CD4-positive, alpha-beta T cell (primary cell): ENCODE measurements at regions of chr14 and their contacts with region 1.

Region 1: DNA sequence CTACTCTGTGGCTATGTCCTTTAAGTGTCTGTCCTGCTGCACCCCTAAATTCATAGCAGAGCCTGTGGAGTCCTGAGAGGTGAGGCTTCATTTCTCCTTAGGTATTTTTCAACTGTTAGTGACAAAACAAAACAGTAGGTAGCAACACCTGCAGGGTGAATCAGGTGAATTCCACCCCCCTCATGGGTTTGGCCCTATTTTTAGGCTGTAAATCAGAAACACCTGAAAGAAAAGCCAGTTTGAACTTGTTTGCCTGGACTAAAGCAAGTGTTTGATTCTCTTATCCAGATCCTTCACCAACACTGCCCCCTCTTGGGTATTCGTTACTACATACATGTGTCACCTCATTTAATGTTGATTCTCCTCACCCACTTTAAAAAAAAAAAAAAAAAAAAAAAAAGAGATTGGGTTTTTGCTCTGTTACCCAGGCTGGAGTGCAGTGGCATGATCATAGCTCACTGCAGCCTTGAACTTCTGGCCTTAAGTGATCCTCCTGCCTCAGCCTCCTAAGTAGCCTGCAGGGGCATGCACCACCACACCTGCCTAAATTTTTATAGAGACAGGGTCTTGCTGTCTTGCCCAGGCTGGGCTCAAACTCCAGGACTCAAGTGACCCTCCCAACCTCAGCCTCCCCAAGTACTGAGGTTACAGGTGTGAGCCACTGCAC is 10.3 kb downstream of the TBPL2 start:
- DNase-seq: peak in 11 of 14 experiments; percentile 4 to 85 (median 48)
- ATAC-seq: peak; percentile 97
- H3K4me3 ChIP-seq: no peak overlapping the region
- H3K4me3 Mint-ChIP-seq: no peak overlapping the region
- H3K27ac ChIP-seq: peak overlapping the region in 1 of 2 donors; percentile 13
- H3K27ac Mint-ChIP-seq: peak overlapping the region; percentile 59
- H3K4me1 ChIP-seq: peaks cover 26% of the 10 kb centered on the region
- H3K4me1 Mint-ChIP-seq: peaks cover 42% of the 10 kb centered on the region
- H3K27me3 ChIP-seq: no peaks in the 10 kb centered on the region
- H3K27me3 Mint-ChIP-seq: no peaks in the 10 kb centered on the region
- CTCF ChIP-seq: peak; percentile 58

Region 2: DNA sequence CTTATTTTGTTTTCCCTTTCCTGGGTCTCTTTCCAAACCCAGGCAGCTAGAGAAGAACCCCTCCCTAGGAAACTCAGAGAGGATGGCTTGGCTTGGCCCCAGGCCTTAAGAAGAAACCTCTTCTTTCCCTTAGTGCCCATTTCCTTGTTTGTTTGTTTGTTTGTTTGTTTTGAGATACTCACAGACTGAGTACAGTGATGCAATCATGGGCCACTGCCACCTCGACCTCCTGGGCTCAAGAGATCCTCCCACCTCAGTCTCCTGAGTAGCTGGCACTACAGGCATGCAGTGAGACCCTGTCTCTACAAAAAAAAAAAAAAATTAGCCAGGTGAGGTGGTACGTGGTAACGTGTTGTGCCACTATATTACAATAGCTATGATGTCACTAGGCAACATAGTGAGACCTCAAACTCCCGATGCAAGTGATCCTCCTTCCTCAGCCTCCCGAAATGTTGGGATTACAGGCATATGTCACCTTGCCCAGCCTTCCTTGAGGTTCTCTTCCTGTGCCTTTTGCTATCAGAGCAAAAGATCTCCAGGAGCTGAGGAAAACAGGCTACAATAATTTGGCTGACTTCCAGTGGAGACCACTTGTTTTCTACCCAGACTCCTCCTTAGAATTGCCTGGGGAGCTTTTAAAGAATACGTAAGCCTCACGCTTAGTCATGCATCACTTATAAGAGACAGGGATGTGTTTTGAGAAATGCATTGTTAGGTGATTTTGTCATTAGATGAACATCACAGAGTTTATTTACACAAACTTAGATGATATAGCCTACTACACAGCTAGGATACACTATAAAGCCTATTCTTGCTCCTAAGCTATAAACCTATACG is 335.6 kb before region 1 on chr14:
- CTCF ChIA-PET with region 1: no interaction called
- POLR2A ChIA-PET with region 1: no interaction called
- intact Hi-C with region 1: loop called in 1 of 2 experiments (anchors 5 kb)
- DNase-seq: no peak
- ATAC-seq: no peak
- H3K4me3 ChIP-seq: no peak overlapping the region
- H3K4me3 Mint-ChIP-seq: no peak overlapping the region
- H3K27ac ChIP-seq: no peak overlapping the region
- H3K27ac Mint-ChIP-seq: no peak overlapping the region
- H3K4me1 ChIP-seq: peaks cover 29% of the 10 kb centered on the region
- H3K4me1 Mint-ChIP-seq: peaks cover 19% of the 10 kb centered on the region
- H3K27me3 ChIP-seq: no peaks in the 10 kb centered on the region
- H3K27me3 Mint-ChIP-seq: no peaks in the 10 kb centered on the region
- CTCF ChIP-seq: no peak

Region 3: GRCh38 chr14:55245657-55246268 is 184.4 kb before region 1 on chr14:
- CTCF ChIA-PET with region 1: interaction called, 3 read pairs
- POLR2A ChIA-PET with region 1: no interaction called
- intact Hi-C with region 1: loop called (anchors 1 to 2 kb)
- DNase-seq: peak in 8 of 14 experiments; percentile 8 to 70 (median 32)
- ATAC-seq: peak; percentile 76
- H3K4me3 ChIP-seq: no peak overlapping the region
- H3K4me3 Mint-ChIP-seq: no peak overlapping the region
- H3K27ac ChIP-seq: no peak overlapping the region
- H3K27ac Mint-ChIP-seq: no peak overlapping the region
- H3K4me1 ChIP-seq: no peaks in the 10 kb centered on the region
- H3K4me1 Mint-ChIP-seq: no peaks in the 10 kb centered on the region
- H3K27me3 ChIP-seq: peaks cover 0 to 5% of the 10 kb centered on the region in 2 experiments
- H3K27me3 Mint-ChIP-seq: peaks cover 38% of the 10 kb centered on the region
- CTCF ChIP-seq: peak; percentile 68

Region 4: DNA sequence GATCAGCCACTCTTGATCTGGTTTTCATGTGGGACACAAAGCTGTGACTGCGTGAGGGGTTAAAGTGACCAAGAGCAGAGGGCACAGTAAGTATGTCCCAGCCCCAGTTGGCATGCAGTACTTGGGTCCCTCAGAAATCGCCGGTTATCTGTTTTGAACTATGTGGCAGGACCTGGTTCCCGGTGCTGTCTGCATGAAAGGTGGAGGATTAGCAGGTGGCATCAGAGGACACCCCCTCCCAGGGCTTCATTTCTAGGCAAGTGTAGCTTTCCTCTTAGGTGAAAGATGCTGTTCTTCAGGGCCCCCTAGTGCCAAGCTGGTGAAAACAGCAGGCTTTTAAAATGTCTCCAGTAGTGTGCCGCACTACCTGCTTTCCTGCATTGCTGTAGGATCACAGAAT is 75.7 kb before region 1 on chr14:
- CTCF ChIA-PET with region 1: no interaction called
- POLR2A ChIA-PET with region 1: no interaction called
- intact Hi-C with region 1: loop called in 1 of 2 experiments (anchors 5 kb)
- DNase-seq: peak; percentile 48 to 89 (median 58)
- ATAC-seq: peak; percentile 90
- H3K4me3 ChIP-seq: peak overlapping the region; percentile 32
- H3K4me3 Mint-ChIP-seq: peak overlapping the region; percentile 57
- H3K27ac ChIP-seq: peak overlapping the region; percentile 43 to 67
- H3K27ac Mint-ChIP-seq: peak overlapping the region; percentile 91
- H3K4me1 ChIP-seq: peaks cover 17% of the 10 kb centered on the region
- H3K4me1 Mint-ChIP-seq: peaks cover 17% of the 10 kb centered on the region
- H3K27me3 ChIP-seq: no peaks in the 10 kb centered on the region
- H3K27me3 Mint-ChIP-seq: no peaks in the 10 kb centered on the region
- CTCF ChIP-seq: peak; percentile 73

Region 5: GRCh38 chr14:55645145-55645544 is 215.0 kb after region 1 on chr14:
- CTCF ChIA-PET with region 1: no interaction called
- POLR2A ChIA-PET with region 1: no interaction called
- intact Hi-C with region 1: no loop called
- DNase-seq: no peak
- ATAC-seq: no peak
- H3K4me3 ChIP-seq: no peak overlapping the region
- H3K4me3 Mint-ChIP-seq: no peak overlapping the region
- H3K27ac ChIP-seq: no peak overlapping the region
- H3K27ac Mint-ChIP-seq: no peak overlapping the region
- H3K4me1 ChIP-seq: no peaks in the 10 kb centered on the region
- H3K4me1 Mint-ChIP-seq: peaks cover 5% of the 10 kb centered on the region
- H3K27me3 ChIP-seq: no peaks in the 10 kb centered on the region
- H3K27me3 Mint-ChIP-seq: no peaks in the 10 kb centered on the region
- CTCF ChIP-seq: no peak

Region 6: DNA sequence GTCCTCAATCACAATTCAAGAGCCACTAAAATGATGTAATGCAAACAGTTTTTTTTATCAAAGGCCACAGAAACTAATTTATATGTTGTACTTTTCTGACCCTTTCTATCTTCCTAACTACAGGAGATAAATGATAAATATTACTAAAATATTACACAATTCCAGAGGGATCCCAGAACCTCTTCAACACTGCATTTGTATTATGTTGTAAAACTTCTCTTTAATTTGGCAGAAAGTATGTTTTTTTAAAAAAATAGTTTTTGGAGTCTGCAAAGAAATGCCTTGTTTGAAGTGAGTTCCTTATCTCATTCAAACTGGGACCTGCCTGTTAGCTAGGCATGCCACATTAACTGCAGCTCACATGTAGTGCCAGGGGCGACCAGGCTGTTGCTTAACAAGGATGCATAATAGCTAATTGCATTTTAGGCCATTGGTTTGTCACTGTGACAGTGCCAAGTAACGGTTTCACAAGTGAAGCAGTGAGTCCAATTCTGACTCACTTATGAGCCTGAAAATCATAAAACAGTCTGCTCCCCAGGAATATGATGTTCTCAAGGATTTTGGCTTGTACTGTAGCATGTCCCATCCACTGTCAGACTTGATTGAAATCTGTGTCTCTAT is 416.8 kb after region 1 on chr14:
- CTCF ChIA-PET with region 1: no interaction called
- POLR2A ChIA-PET with region 1: no interaction called
- intact Hi-C with region 1: no loop called
- DNase-seq: no peak
- ATAC-seq: no peak
- H3K4me3 ChIP-seq: no peak overlapping the region
- H3K4me3 Mint-ChIP-seq: no peak overlapping the region
- H3K27ac ChIP-seq: no peak overlapping the region
- H3K27ac Mint-ChIP-seq: no peak overlapping the region
- H3K4me1 ChIP-seq: no peaks in the 10 kb centered on the region
- H3K4me1 Mint-ChIP-seq: no peaks in the 10 kb centered on the region
- H3K27me3 ChIP-seq: no peaks in the 10 kb centered on the region
- H3K27me3 Mint-ChIP-seq: peaks cover 9% of the 10 kb centered on the region
- CTCF ChIP-seq: no peak

Region 7: GRCh38 chr14:56579345-56580220 is 1149.4 kb after region 1 on chr14 and contains the start of gene TMEM260:
- CTCF ChIA-PET with region 1: no interaction called
- POLR2A ChIA-PET with region 1: no interaction called
- intact Hi-C with region 1: loop called in 1 of 2 experiments (anchors 10 kb)
- DNase-seq: peak; percentile 84 to 95 (median 92)
- ATAC-seq: peak; percentile 92
- H3K4me3 ChIP-seq: peak within 1 kb of the TSS; percentile 72
- H3K4me3 Mint-ChIP-seq: peak within 1 kb of the TSS; percentile 89
- H3K27ac ChIP-seq: peak within 1 kb of the TSS; percentile 71 to 75
- H3K27ac Mint-ChIP-seq: peak within 1 kb of the TSS; percentile 67
- H3K4me1 ChIP-seq: peaks cover 12% of the 10 kb centered on the region
- H3K4me1 Mint-ChIP-seq: peaks cover 48% of the 10 kb centered on the region
- H3K27me3 ChIP-seq: no peaks in the 10 kb centered on the region
- H3K27me3 Mint-ChIP-seq: peaks cover 2% of the 10 kb centered on the region
- CTCF ChIP-seq: peak; percentile 91
- total RNA-seq, gene TMEM260: 8.7 to 9.2 TPM